PC-9 (cell line): ENCODE measurements at regions of chr5 and their contacts with region 1.

Region 1: DNA sequence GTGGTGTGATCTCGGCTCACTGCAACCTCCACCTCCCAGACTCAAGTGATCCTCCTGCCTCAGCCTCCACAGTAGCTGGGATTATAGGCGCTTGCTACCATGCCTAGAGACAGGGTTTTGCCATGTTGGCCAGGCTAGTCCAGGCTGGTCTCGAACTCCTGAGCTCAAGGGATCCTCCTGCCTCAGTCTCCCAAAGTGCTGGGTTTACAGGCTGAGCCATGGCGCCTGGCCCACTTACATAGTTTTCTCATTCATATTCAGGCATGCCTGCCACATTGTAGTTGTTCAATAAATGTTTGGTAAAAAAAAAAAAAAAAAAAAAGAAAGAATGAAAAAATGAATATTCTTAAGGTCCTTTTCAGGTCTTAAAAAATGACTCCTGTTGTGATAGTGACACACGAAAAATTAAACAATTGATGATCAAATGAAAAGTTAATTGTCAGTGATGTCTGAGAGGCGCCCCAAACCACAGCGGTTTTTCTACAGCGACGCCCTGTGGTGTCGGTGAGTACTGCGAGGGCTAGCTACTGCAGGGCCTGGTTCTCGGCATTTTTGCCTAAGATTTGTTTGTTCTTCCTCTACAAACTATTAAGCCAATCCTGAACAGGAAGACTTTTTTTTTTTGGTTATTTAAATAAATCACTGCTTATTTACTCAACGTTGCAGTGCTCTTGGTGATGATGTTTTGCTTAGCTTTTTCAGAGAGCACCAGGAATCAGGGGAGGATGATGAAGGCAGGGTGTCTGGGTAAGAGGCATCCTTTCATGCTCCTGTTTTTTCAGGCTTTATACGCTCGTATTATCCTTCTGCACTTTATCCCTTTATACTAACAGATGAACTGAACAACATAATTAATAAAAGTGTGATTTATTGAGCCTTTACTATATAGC is 67.0 kb upstream of the DPYSL3 start:
- DNase-seq: peak in 1 of 2 experiments; percentile 33
- H3K4me3 ChIP-seq: no peak overlapping the region
- H3K27ac ChIP-seq: no peak overlapping the region
- H3K4me1 ChIP-seq: no peaks in the 10 kb centered on the region
- H3K27me3 ChIP-seq: peaks cover 5% of the 10 kb centered on the region; the same call in 1 of the 2 replicates
- CTCF ChIP-seq: peak; percentile 76

Region 2: GRCh38 chr5:147223948-147224791 is 352.7 kb before region 1 on chr5:
- CTCF ChIA-PET with region 1: no interaction called
- POLR2A ChIA-PET with region 1: no interaction called
- intact Hi-C with region 1: loop called (anchors 2 kb)
- DNase-seq: no peak
- H3K4me3 ChIP-seq: no peak overlapping the region
- H3K27ac ChIP-seq: no peak overlapping the region
- H3K4me1 ChIP-seq: no peaks in the 10 kb centered on the region
- H3K27me3 ChIP-seq: no peaks in the 10 kb centered on the region; the same call in 1 of the 2 replicates
- CTCF ChIP-seq: peak; percentile 63

Region 3: GRCh38 chr5:147453875-147454814 is 122.7 kb before region 1 on chr5:
- CTCF ChIA-PET with region 1: no interaction called
- POLR2A ChIA-PET with region 1: no interaction called
- intact Hi-C with region 1: loop called (anchors 1 kb)
- DNase-seq: peak in 1 of 2 experiments; percentile 57
- H3K4me3 ChIP-seq: no peak overlapping the region
- H3K27ac ChIP-seq: no peak overlapping the region
- H3K4me1 ChIP-seq: no peaks in the 10 kb centered on the region
- H3K27me3 ChIP-seq: peaks cover 4% of the 10 kb centered on the region; the same call in 1 of the 2 replicates
- CTCF ChIP-seq: peak; percentile 42; the same call in 1 of the 2 replicates

Region 4: DNA sequence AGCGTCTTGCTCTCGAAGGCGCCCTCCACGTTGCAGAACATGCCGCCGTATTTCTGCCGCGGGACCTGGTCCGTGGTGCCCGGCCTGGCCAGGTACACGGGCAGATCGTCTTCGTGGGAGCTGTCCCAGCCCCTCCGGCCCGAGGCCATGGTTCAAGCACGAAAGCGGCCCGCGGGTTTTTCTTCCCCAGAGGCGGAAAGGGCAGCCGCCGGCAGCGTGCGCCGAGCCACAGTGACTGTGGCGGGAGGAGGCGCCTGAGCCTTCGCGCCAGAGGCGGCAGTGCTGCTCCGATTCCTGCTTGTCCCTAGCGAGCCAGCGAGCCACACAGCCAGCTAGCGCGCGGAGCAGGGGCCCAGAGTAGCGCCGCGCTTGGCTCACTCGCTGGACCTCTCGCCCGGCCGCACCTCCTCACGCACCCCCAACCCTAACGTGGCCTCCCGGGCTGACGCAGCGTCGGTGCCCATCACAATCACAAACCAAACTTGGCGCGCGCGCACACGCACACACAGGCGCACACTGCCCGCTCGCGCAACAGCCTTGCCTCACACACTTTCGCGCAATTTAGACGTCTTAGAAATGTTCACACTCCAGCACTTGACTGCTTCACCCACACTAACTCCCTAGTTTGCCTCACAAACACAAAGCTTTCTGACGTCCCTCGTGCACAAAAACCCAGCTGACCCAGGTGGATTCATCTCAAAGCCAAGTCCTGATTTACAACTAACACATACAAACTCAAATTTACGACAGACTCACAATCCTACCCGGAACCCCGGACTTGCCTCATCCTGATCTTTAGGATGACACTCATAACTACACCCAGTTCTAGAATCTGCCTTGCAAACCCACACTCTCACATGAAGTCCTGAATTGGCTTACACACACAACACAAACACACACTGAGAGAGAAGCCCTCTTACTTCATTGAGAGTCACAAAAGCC is 66.9 kb before region 1 on chr5 and contains the start of gene DPYSL3:
- CTCF ChIA-PET with region 1: no interaction called
- POLR2A ChIA-PET with region 1: no interaction called
- intact Hi-C with region 1: loop called (anchors 5 kb)
- DNase-seq: peak in 1 of 2 experiments; percentile 20
- H3K4me3 ChIP-seq: no peak within 1 kb of the TSS
- H3K27ac ChIP-seq: no peak within 1 kb of the TSS
- H3K4me1 ChIP-seq: no peaks in the 10 kb centered on the region
- H3K27me3 ChIP-seq: peaks cover 52% of the 10 kb centered on the region
- CTCF ChIP-seq: no peak
- total RNA-seq, gene DPYSL3: 0.40 and 1.3 TPM in 2 replicates

Region 5: GRCh38 chr5:147842869-147843268 is 266.0 kb after region 1 on chr5:
- CTCF ChIA-PET with region 1: interaction called, 26 read pairs
- POLR2A ChIA-PET with region 1: no interaction called
- intact Hi-C with region 1: no loop called
- DNase-seq: no peak
- H3K4me3 ChIP-seq: no peak overlapping the region
- H3K27ac ChIP-seq: no peak overlapping the region
- H3K4me1 ChIP-seq: no peaks in the 10 kb centered on the region
- H3K27me3 ChIP-seq: 0 out of 2 replicates have a peak, but pooled peaks cover 4% of the 10 kb centered on the region
- CTCF ChIP-seq: no peak

Region 6: GRCh38 chr5:148033146-148033545 is 456.3 kb after region 1 on chr5:
- CTCF ChIA-PET with region 1: no interaction called
- POLR2A ChIA-PET with region 1: no interaction called
- intact Hi-C with region 1: no loop called
- DNase-seq: no peak
- H3K4me3 ChIP-seq: no peak overlapping the region
- H3K27ac ChIP-seq: no peak overlapping the region
- H3K4me1 ChIP-seq: no peaks in the 10 kb centered on the region
- H3K27me3 ChIP-seq: no peaks in the 10 kb centered on the region
- CTCF ChIP-seq: no peak

Region 7: GRCh38 chr5:148416921-148417320 is 840.0 kb after region 1 on chr5:
- CTCF ChIA-PET with region 1: no interaction called
- POLR2A ChIA-PET with region 1: no interaction called
- intact Hi-C with region 1: no loop called
- DNase-seq: no peak
- H3K4me3 ChIP-seq: no peak overlapping the region
- H3K27ac ChIP-seq: no peak overlapping the region
- H3K4me1 ChIP-seq: no peaks in the 10 kb centered on the region
- H3K27me3 ChIP-seq: no peaks in the 10 kb centered on the region
- CTCF ChIP-seq: no peak